ENCODE measurements at regions of chr1 and their contacts with region 1.

Region 1: DNA sequence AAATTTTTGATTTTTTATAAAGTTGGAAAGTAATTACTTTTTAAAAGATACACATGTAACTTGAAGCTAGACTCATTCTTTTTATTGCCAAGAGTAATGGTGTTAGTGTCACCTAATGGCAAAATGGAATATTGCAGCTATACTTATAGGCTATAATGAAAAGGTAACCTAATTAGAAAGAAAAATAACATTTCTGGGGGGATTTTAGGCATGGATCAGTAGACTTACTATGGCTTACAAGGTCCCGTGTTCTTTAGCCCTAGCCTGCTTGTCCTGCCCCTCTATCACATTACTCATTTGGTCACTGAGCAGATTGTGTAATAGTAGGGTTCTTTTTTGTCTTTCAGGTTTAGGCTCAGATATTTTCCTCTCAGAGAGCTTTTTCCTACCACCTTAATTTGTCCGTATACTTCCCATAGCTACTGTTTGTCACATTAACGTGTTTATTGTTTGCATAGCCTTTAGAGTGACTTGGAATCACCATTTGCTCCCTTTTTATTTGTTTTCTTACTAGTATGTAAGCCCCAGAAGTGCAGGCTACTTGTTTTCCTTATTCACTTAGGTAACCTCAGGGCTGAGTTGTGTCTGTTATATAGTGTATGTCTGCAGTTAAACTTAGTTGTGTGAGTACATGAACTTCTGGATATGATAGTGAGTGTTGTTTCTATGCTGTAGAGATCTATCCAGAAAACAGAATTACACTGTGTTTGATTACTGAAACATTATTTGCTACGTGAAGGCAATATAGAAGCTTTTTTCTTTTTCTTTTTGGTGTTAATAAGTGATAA is 58.7 kb downstream of the RABGAP1L start:
- DNase-seq: no peak
- H3K4me3 ChIP-seq: no peak overlapping the region
- H3K27ac ChIP-seq: no peak overlapping the region
- H3K27me3 ChIP-seq: no peaks in the 10 kb centered on the region
- CTCF ChIP-seq: peak; percentile 72

Region 2: GRCh38 chr1:173444757-173445156 is 773.2 kb before region 1 on chr1:
- CTCF ChIA-PET with region 1: no interaction called
- POLR2A ChIA-PET with region 1: no interaction called
- DNase-seq: no peak
- H3K4me3 ChIP-seq: no peak overlapping the region
- H3K27ac ChIP-seq: no peak overlapping the region
- H3K27me3 ChIP-seq: no peaks in the 10 kb centered on the region
- CTCF ChIP-seq: no peak

Region 3: DNA sequence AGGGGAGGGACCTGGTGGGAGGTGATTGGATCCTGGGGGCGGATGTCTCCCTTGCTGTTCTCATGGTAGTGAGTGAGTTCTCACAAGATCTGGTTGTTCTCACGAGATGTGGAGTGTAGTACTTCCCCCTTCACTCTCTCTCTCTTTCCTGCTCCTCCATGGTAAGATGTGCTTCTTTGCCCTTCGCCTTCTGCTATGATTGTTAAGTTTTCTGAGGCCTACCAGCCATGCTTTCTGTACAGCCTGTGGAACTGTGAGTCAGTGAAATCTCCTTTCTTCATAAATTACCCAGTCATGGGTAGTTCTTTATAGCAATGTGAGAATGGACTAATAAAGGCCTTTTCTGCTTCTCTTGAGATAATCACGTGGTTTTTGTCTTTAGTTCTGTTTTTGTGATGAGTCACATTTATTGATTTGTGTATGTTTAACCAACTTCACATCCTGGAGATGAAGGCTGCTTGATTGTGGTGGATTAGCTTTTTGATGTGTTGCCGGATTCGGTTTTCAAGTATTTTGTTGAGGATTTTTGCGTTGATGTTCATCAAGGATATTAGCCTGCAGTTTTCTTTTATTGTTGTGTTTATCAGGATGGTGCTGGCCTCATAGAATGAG is 13.2 kb before region 1 on chr1:
- CTCF ChIA-PET with region 1: interaction called, 20 read pairs
- POLR2A ChIA-PET with region 1: no interaction called
- DNase-seq: no peak
- H3K4me3 ChIP-seq: no peak overlapping the region
- H3K27ac ChIP-seq: no peak overlapping the region
- H3K27me3 ChIP-seq: no peaks in the 10 kb centered on the region
- CTCF ChIP-seq: no peak